B cell (primary cell): ENCODE measurements at regions of chr5 and their contacts with region 1.

Region 1: DNA sequence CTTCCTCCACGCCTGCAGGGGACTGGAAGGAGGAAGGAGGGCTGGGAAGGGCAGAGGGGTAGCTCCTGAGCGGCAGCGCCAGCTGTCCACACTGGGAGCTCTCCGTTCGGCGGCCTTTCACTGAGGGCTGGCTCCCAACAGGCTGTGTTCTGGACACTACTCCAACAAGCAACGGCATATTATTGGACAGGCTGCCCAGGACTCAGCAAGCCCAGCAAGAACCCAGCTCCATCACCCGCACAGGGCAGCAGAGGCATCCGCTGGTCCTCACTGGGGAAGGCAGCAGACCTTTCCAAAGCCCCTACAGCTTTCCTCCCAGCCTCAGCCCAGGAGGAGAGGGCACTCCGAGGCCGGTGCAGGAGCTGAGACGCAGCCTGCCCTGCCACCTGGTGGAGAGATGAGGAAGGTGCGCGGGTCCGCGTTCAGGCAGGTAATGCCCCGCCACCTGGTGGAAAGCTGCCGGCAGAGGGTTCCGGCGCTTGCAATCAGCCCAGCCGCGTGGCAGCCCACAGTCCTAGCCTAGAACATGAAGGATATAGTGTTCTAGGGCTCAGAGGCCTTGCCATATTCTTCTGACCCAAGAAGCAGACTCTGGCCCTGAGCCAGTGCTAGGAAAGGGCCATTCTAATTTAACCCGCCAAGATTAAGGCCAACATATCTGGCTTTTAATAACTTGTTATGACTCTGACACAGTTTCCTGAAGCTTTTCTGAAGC is 74.4 kb downstream of the NRG2 start:
- DNase-seq: peak; percentile 89
- ATAC-seq: peak; percentile 99
- H3K4me3 ChIP-seq: no peak overlapping the region
- H3K4me3 Mint-ChIP-seq: no peak overlapping the region
- H3K27ac ChIP-seq: no peak overlapping the region
- H3K27ac Mint-ChIP-seq: no peak overlapping the region
- H3K4me1 ChIP-seq: no peaks in the 10 kb centered on the region
- H3K4me1 Mint-ChIP-seq: no peaks in the 10 kb centered on the region
- H3K27me3 ChIP-seq: peaks cover 0 to 25% (median 8%) of the 10 kb centered on the region in 4 experiments
- H3K27me3 Mint-ChIP-seq: peaks cover 44% of the 10 kb centered on the region
- CTCF ChIP-seq: peak; percentile 100

Region 2: DNA sequence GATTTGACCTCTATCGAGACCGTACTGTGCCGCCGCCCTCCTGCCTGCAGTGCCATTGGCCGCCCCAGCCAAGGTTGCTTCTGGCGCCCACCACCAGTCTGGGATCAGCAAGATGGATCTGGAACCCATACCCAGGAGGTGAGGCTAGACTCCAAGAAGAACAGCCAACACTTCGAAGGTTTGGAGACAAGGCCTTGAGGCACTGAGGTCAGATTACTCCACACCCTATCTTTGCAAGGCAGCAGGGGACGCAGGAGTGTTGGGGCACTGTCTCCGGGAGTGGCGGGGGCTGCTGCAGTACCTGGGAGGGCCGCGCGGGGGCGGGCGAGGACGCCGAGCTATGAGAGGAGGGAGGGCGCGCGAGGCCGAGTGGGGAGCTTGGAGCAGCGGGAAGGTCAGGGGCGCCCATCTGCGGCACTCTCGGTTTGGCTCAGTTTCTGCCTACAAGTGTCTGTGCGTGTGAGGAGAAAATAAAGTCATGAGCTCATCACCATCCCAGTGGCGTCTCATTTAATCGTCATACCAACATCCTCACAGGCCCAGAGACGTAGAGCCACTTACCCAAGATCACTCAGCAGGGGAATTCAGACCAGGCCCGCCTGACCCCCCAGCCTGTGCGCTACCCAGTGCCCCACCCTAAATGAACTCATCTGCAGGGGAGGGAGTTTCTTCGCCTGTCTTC is 193.6 kb before region 1 on chr5:
- CTCF ChIA-PET with region 1: interaction called, 11 read pairs
- POLR2A ChIA-PET with region 1: no interaction called
- intact Hi-C with region 1: no loop called
- DNase-seq: peak; percentile 84
- ATAC-seq: peak; percentile 98
- H3K4me3 ChIP-seq: peak overlapping the region in 3 of 5 experiments; percentile 1 to 26 (median 6)
- H3K4me3 Mint-ChIP-seq: peak overlapping the region; percentile 64
- H3K27ac ChIP-seq: no peak overlapping the region
- H3K27ac Mint-ChIP-seq: peak overlapping the region; percentile 41
- H3K4me1 ChIP-seq: peaks cover 7 to 13% of the 10 kb centered on the region in 2 donors
- H3K4me1 Mint-ChIP-seq: peaks cover 15% of the 10 kb centered on the region
- H3K27me3 ChIP-seq: peaks cover 0 to 5% (median 0%) of the 10 kb centered on the region in 4 experiments
- H3K27me3 Mint-ChIP-seq: peaks cover 14% of the 10 kb centered on the region
- CTCF ChIP-seq: peak; percentile 94

Region 3: DNA sequence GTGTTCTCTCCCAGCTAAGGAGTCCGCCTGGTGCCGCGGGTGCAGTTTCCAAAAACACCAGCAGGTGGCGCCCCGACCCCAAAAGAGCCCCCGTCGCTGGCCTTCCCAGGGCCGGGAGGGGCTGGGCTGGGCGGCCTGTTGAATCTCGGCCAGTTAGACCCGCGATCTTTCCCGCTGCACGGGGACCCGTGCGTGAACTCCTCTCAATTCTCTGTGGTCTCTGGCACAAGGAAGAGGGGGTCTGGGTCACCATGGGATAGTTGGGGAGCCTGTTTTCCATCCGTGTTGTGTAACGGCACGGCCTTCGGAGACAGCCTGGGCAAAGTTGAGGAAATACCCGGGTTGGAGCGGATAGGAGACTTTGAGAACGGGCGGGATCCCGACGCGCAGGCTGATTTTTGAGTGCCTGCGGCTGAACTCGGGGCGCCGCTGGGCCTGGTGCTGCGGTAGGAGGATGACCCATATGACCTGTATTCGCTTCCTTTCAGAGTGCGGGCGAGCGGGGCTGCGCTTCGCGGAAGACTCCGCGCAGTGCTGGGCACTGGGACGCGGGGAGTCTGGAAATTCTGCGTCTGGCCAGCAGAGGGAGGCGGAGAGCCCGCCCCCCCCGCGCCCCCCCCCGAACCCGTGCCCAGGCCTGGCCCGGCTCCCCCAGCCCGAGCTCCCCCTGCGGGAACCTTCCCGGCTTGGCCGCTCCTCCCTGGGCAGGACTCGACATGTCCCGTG is 181.0 kb before region 1 on chr5:
- CTCF ChIA-PET with region 1: interaction called, 203 read pairs
- POLR2A ChIA-PET with region 1: no interaction called
- intact Hi-C with region 1: no loop called
- DNase-seq: peak; percentile 88
- ATAC-seq: peak; percentile 91
- H3K4me3 ChIP-seq: peak overlapping the region; percentile 43 to 70 (median 62)
- H3K4me3 Mint-ChIP-seq: peak overlapping the region; percentile 93
- H3K27ac ChIP-seq: no peak overlapping the region
- H3K27ac Mint-ChIP-seq: peak overlapping the region; percentile 37
- H3K4me1 ChIP-seq: peaks cover 3 to 13% of the 10 kb centered on the region in 2 donors
- H3K4me1 Mint-ChIP-seq: peaks cover 10% of the 10 kb centered on the region
- H3K27me3 ChIP-seq: peaks cover 0 to 15% (median 4%) of the 10 kb centered on the region in 4 experiments
- H3K27me3 Mint-ChIP-seq: peaks cover 28% of the 10 kb centered on the region
- CTCF ChIP-seq: peak; percentile 97

Region 4: GRCh38 chr5:139863855-139864558 is 104.7 kb before region 1 on chr5:
- CTCF ChIA-PET with region 1: interaction called, 14 read pairs
- POLR2A ChIA-PET with region 1: no interaction called
- intact Hi-C with region 1: loop called (anchors 1 kb)
- DNase-seq: peak; percentile 73
- ATAC-seq: peak; percentile 85
- H3K4me3 ChIP-seq: no peak overlapping the region
- H3K4me3 Mint-ChIP-seq: no peak overlapping the region
- H3K27ac ChIP-seq: no peak overlapping the region
- H3K27ac Mint-ChIP-seq: no peak overlapping the region
- H3K4me1 ChIP-seq: peaks cover 0 to 3% of the 10 kb centered on the region in 2 donors
- H3K4me1 Mint-ChIP-seq: peaks cover 7% of the 10 kb centered on the region
- H3K27me3 ChIP-seq: peaks cover 0 to 6% (median 1%) of the 10 kb centered on the region in 4 experiments
- H3K27me3 Mint-ChIP-seq: peaks cover 23% of the 10 kb centered on the region
- CTCF ChIP-seq: peak; percentile 92

Region 5: GRCh38 chr5:139942243-139942642 is 26.5 kb before region 1 on chr5:
- CTCF ChIA-PET with region 1: interaction called, 13 read pairs
- POLR2A ChIA-PET with region 1: no interaction called
- intact Hi-C with region 1: no loop called
- DNase-seq: no peak
- ATAC-seq: no peak
- H3K4me3 ChIP-seq: no peak overlapping the region
- H3K4me3 Mint-ChIP-seq: no peak overlapping the region
- H3K27ac ChIP-seq: no peak overlapping the region
- H3K27ac Mint-ChIP-seq: no peak overlapping the region
- H3K4me1 ChIP-seq: peaks cover 7 to 15% of the 10 kb centered on the region in 2 donors
- H3K4me1 Mint-ChIP-seq: peaks cover 19% of the 10 kb centered on the region
- H3K27me3 ChIP-seq: no peaks in the 10 kb centered on the region
- H3K27me3 Mint-ChIP-seq: peaks cover 17% of the 10 kb centered on the region
- CTCF ChIP-seq: no peak

Region 6: DNA sequence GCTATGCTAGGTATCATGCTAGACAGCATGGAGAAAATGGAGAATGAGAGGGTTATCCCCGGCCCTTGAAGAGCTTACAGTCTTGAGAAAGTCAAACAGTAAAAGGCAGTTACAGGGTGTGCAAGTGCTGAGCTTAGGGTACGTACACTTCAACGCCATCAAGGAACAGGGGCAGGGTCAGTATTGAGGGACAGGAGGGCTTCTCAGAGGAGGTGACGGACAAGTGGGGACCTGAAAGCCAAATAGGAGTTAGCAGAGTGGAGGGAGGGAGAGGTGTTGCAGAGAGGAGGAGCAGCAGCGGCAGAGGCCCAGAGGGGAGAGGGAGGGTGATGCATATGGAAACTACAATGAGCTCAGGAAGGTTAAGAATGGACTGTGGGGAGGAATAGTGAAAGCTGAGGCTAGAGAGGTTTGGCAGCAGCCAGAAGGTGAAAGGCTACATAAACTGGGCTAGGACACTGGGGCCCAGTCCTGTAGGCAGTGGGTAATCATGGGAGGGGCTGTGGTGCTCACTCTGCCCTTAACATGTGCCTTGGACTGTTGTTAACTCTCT is 13.6 kb before region 1 on chr5:
- CTCF ChIA-PET with region 1: interaction called, 30 read pairs
- POLR2A ChIA-PET with region 1: no interaction called
- intact Hi-C with region 1: no loop called
- DNase-seq: no peak
- ATAC-seq: no peak
- H3K4me3 ChIP-seq: no peak overlapping the region
- H3K4me3 Mint-ChIP-seq: no peak overlapping the region
- H3K27ac ChIP-seq: no peak overlapping the region
- H3K27ac Mint-ChIP-seq: no peak overlapping the region
- H3K4me1 ChIP-seq: no peaks in the 10 kb centered on the region
- H3K4me1 Mint-ChIP-seq: no peaks in the 10 kb centered on the region
- H3K27me3 ChIP-seq: peaks cover 0 to 10% (median 3%) of the 10 kb centered on the region in 4 experiments
- H3K27me3 Mint-ChIP-seq: peaks cover 47% of the 10 kb centered on the region
- CTCF ChIP-seq: no peak

Region 7: GRCh38 chr5:139982157-139982974 is 13.7 kb after region 1 on chr5:
- CTCF ChIA-PET with region 1: interaction called, 35 read pairs
- POLR2A ChIA-PET with region 1: no interaction called
- intact Hi-C with region 1: no loop called
- DNase-seq: no peak
- ATAC-seq: no peak
- H3K4me3 ChIP-seq: no peak overlapping the region
- H3K4me3 Mint-ChIP-seq: no peak overlapping the region
- H3K27ac ChIP-seq: no peak overlapping the region
- H3K27ac Mint-ChIP-seq: no peak overlapping the region
- H3K4me1 ChIP-seq: peaks cover 0 to 4% of the 10 kb centered on the region in 2 donors
- H3K4me1 Mint-ChIP-seq: peaks cover 8% of the 10 kb centered on the region
- H3K27me3 ChIP-seq: peaks cover 0 to 20% (median 2%) of the 10 kb centered on the region in 4 experiments
- H3K27me3 Mint-ChIP-seq: peaks cover 50% of the 10 kb centered on the region
- CTCF ChIP-seq: no peak